Activated naive CD4-positive, alpha-beta T cell treated with anti-CD3 and anti-CD28 coated beads for 36 hours (primary cell): ENCODE measurements at regions of chr14 and their contacts with region 1.

Region 1: GRCh38 chr14:76647697-76648298 is 113.5 kb upstream of the VASH1 start:
- DNase-seq: peak; percentile 34
- H3K4me3 Mint-ChIP-seq: no peak overlapping the region
- H3K27ac Mint-ChIP-seq: no peak overlapping the region
- H3K4me1 Mint-ChIP-seq: no peaks in the 10 kb centered on the region
- H3K27me3 Mint-ChIP-seq: peaks cover 4% of the 10 kb centered on the region

Region 2: GRCh38 chr14:76050797-76051392 is 596.9 kb before region 1 on chr14:
- CTCF ChIA-PET with region 1: interaction called, 3 read pairs
- intact Hi-C with region 1: loop called (anchors 1 kb)
- DNase-seq: peak; percentile 76
- H3K4me3 Mint-ChIP-seq: no peak overlapping the region
- H3K27ac Mint-ChIP-seq: no peak overlapping the region
- H3K4me1 Mint-ChIP-seq: no peaks in the 10 kb centered on the region
- H3K27me3 Mint-ChIP-seq: no peaks in the 10 kb centered on the region

Region 3: DNA sequence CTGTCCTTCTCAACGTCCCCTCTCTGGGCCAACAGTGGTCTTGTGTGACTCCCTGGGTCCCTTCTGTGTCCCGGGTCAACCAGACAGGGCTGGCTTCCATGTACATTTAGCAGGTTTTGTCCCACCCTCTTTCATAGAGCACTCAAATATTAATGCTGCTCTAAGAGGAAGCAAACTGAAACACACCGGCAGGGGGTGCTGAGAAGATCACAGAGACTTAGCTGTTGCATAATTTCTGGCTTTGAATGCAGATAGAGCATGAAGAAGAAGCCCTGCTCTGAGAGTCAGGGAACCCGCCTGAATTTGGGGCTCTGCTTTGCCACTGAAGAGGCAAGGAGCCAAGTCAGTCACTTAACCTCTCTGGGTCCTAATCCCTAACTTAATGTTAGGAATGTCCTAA is 133.2 kb before region 1 on chr14:
- CTCF ChIA-PET with region 1: no interaction called
- intact Hi-C with region 1: loop called (anchors 2 kb)
- DNase-seq: peak; percentile 34
- H3K4me3 Mint-ChIP-seq: no peak overlapping the region
- H3K27ac Mint-ChIP-seq: no peak overlapping the region
- H3K4me1 Mint-ChIP-seq: no peaks in the 10 kb centered on the region
- H3K27me3 Mint-ChIP-seq: peaks cover 13% of the 10 kb centered on the region

Region 4: DNA sequence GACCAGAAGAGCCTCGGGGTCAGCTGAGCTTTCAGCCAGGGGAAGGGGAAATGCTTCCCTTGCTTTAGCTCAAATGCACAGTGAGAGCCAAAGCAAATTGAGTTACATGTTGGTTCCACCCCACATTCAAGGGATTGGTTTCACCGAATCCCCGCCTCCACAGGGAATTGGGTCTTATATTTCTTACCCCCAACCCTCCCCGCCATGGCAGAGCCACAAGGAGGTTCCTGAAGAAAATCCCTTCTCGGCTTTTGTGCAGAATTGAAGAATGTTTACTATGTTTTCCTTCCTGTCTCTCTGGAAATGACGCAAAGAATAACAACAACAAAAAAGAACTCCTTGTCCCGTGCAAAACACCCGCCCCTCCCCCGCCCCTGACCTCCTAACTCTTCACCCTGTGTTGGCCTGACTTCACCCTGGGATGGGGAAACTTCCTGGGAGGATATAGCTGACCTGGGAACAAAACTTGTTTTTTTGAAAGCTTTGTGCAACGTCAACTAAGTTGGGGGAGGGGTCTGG is 428.4 kb after region 1 on chr14:
- CTCF ChIA-PET with region 1: no interaction called
- intact Hi-C with region 1: no loop called
- DNase-seq: no peak
- H3K4me3 Mint-ChIP-seq: no peak overlapping the region
- H3K27ac Mint-ChIP-seq: no peak overlapping the region
- H3K4me1 Mint-ChIP-seq: no peaks in the 10 kb centered on the region
- H3K27me3 Mint-ChIP-seq: no peaks in the 10 kb centered on the region